K562 (cell line): ENCODE measurements at regions of chr7 and their contacts with region 1.

Region 1: DNA sequence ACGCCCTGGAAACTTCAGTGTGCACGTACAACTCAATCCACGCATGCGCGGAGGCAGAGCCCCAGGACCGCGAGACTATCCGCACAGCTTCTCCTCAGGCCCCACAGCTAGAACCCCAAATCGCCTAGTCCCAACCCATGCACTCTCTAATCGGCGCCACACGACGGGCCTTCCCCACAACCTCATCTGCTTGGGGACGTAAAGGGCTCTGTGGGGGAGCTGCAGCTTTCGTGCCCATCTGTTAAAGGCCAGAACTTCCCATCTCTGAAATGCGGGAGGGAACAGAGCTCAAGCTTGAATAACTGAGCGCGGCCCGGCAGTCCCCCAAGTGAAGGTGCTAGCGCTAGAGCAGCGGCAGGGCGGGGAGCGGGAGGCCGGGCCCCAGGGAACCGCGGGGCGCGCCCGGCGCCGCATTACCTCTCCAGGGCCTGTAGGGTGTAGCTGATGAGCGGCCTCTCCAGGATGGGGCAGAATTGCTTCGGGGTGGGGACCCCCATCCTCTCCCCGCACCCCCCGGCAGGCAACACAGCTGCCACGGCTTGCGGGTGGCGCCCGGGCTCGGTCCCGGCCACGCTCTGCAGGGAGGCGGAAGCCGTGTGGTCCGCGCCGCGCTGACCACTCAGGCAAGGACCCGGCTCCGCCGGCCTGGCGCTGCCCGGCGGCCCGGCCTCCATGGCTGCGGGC is 547 bp downstream of the CRPPA start:
- DNase-seq: peak; percentile 85 to 97 (median 90)
- ATAC-seq: peak; percentile 87
- H3K4me3 ChIP-seq: peak overlapping the region; percentile 66
- H3K27ac ChIP-seq: peak overlapping the region; percentile 97
- H3K4me1 ChIP-seq: peaks cover 23 to 46% of the 10 kb centered on the region in 2 experiments
- H3K27me3 ChIP-seq: no peaks in the 10 kb centered on the region
- CTCF ChIP-seq: peak; percentile 29 to 73 (median 36); a peak in 5 of 6 replicates
- EP300 ChIP-seq: no peak
- POLR2A ChIP-seq: peak; percentile 96
- RAD21 ChIP-seq: peak; percentile 30 to 32; a peak in 3 of 4 replicates

Region 2: GRCh38 chr7:16409777-16410176 is 11.0 kb before region 1 on chr7:
- CTCF ChIA-PET with region 1: no interaction called
- POLR2A ChIA-PET with region 1: interaction called, 12 read pairs
- in situ Hi-C with region 1: no loop called
- intact Hi-C with region 1: no loop called
- DNase-seq: no peak
- ATAC-seq: peak; percentile 85
- H3K4me3 ChIP-seq: no peak overlapping the region
- H3K27ac ChIP-seq: no peak overlapping the region
- H3K4me1 ChIP-seq: peaks cover 0 to 5% of the 10 kb centered on the region in 2 experiments; a peak in 4 of 5 replicates
- H3K27me3 ChIP-seq: no peaks in the 10 kb centered on the region
- CTCF ChIP-seq: peak; percentile 12 to 45 (median 24); a peak in 2 of 6 replicates
- EP300 ChIP-seq: no peak
- POLR2A ChIP-seq: no peak
- RAD21 ChIP-seq: peak in 1 of 2 experiments; percentile 64; a peak in 2 of 4 replicates

Region 3: GRCh38 chr7:16795624-16796023 is 374.8 kb after region 1 on chr7:
- CTCF ChIA-PET with region 1: no interaction called
- POLR2A ChIA-PET with region 1: no interaction called
- in situ Hi-C with region 1: no loop called
- intact Hi-C with region 1: no loop called
- DNase-seq: no peak
- ATAC-seq: no peak
- H3K4me3 ChIP-seq: no peak overlapping the region
- H3K27ac ChIP-seq: no peak overlapping the region
- H3K4me1 ChIP-seq: peaks cover 0 to 3% of the 10 kb centered on the region in 2 experiments; a peak in 1 of 5 replicates
- H3K27me3 ChIP-seq: no peaks in the 10 kb centered on the region; a peak in 1 of 5 replicates
- CTCF ChIP-seq: no peak
- EP300 ChIP-seq: no peak
- POLR2A ChIP-seq: no peak
- RAD21 ChIP-seq: no peak